Activated CD8-positive, alpha-beta T cell treated with anti-CD3 and anti-CD28 coated beads for 36 hours (primary cell): ENCODE measurements at regions of chr17 and their contacts with region 1.

Region 1: DNA sequence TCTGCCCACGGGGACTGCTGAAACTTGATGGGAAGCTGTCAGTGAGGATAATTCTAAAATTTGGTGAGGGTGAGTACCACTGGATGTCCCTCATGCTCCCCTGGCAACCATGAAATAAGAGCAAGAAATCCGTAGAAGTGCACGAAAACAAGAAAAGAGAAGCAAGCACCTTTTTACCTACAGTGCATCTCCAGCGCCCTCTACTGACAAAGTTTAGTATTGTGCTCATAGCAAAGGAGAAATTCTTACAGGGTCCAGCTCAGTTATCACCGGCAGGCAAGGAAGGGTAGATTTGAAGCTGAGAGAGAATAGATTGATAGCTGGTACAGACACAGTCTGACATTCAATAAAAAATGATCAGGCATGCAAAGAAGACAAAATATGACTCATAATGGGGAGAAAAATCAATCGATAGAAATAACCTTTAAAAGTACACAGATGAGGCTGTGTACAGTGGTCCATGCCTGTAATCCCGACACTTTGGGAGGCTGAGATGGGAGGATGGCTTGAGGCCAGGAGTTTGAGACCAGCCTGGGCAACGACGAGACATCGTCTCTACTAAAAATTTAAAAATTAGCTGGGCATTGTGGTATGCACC is 28.3 kb upstream of the TEX2 start:
- DNase-seq: peak; percentile 17
- ATAC-seq: no peak
- H3K4me3 Mint-ChIP-seq: no peak overlapping the region
- H3K27ac Mint-ChIP-seq: no peak overlapping the region
- H3K4me1 Mint-ChIP-seq: no peaks in the 10 kb centered on the region
- H3K27me3 Mint-ChIP-seq: no peaks in the 10 kb centered on the region
- CTCF ChIP-seq: peak; percentile 74

Region 2: DNA sequence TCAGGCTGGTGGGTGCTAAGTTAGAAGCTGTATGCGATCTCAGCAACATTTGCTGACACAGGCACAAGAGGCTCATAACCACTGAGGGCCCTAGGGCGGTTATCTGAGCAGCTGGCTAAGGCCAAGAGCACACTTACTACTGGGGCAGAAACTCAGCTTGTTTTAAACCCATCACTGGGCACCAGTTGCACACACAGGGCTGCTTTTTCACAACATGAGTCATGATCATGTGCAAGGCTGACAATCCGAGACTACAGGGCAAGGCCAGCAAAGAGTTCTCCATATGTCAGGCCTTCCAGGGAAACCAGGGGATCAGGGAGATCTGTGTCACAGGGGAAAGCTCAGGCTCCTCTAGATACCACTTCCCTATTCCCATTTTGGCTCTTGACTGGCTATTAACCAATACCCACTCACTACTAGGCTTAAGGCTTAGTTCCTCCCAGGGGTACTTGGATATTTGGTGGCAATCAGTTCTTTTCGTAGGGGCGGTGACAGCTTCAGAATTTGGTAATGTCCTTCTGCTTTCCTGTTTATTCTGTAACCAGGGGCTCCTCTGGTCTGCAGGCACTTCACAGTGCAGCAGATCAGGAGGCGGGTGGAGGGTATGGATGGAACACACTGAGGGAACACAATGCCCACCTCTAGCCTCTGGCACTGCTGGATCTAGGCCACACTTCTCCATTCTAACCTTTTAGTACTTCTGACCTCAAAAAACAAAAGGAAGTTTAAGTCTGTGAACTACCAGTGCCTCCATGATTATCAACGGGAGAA is 116.5 kb before region 1 on chr17:
- CTCF ChIA-PET with region 1: interaction called, 14 read pairs
- POLR2A ChIA-PET with region 1: no interaction called
- intact Hi-C with region 1: no loop called
- DNase-seq: no peak
- ATAC-seq: no peak
- H3K4me3 Mint-ChIP-seq: no peak overlapping the region
- H3K27ac Mint-ChIP-seq: no peak overlapping the region
- H3K4me1 Mint-ChIP-seq: no peaks in the 10 kb centered on the region
- H3K27me3 Mint-ChIP-seq: no peaks in the 10 kb centered on the region
- CTCF ChIP-seq: no peak

Region 3: DNA sequence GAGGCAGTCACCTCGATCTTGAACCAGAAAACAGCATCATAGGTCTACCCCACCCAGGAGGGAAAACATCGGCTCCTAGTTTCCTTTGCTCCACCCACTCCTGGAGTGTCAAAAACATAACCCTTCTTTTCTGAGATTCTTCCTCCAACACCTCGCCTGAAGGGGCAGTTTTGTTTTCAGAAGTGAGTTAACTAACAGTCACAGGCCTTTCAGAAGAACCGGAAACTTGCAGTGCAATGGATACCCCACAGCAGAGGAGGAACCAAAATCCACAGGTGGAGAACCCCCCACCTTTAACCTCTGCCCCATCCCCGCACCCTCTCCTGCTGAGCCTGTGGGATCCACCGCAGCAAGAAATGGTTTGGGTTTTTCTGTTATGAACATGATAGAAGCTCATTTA is 20.5 kb before region 1 on chr17:
- CTCF ChIA-PET with region 1: interaction called, 11 read pairs
- POLR2A ChIA-PET with region 1: no interaction called
- intact Hi-C with region 1: no loop called
- DNase-seq: peak; percentile 10
- ATAC-seq: peak; percentile 55
- H3K4me3 Mint-ChIP-seq: peak overlapping the region; percentile 28
- H3K27ac Mint-ChIP-seq: peak overlapping the region; percentile 68
- H3K4me1 Mint-ChIP-seq: peaks cover 21% of the 10 kb centered on the region
- H3K27me3 Mint-ChIP-seq: peaks cover 3% of the 10 kb centered on the region
- CTCF ChIP-seq: no peak

Region 4: DNA sequence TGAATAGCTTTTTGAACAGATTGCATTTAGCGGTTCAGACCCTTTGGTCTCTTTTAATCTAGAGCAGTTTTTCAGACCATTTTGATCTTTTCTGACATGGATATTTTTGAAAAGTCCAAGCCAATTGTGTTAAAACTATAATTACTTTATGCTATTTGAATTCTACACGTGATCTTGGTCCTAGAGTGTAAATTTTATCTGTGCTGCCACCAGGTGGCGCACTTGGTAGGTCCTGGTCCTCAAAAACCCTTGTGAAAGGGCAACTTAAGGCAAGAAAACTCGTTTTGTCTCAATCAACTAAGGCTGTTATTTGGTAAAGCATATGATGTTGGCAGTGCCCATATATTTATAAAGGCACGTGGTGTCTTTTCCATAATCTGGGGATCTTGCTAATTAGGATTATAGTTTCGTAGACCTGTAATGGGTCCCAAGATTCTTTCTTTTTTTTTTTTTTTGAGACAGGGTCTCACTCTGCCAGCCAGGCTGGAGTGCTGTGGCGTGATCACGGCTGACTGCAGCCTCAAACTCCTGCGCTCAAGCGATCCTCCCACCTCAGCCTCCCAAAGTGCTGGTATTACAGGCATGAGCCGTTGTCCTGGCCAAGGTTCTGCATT is 15.6 kb after region 1 on chr17:
- CTCF ChIA-PET with region 1: interaction called, 27 read pairs
- POLR2A ChIA-PET with region 1: interaction called, 5 read pairs
- intact Hi-C with region 1: no loop called
- DNase-seq: peak; percentile 85
- ATAC-seq: peak; percentile 69
- H3K4me3 Mint-ChIP-seq: no peak overlapping the region
- H3K27ac Mint-ChIP-seq: no peak overlapping the region
- H3K4me1 Mint-ChIP-seq: peaks cover 4% of the 10 kb centered on the region
- H3K27me3 Mint-ChIP-seq: no peaks in the 10 kb centered on the region
- CTCF ChIP-seq: peak; percentile 94